ENCODE measurements at regions of chr17 and their contacts with region 1.

Region 1: DNA sequence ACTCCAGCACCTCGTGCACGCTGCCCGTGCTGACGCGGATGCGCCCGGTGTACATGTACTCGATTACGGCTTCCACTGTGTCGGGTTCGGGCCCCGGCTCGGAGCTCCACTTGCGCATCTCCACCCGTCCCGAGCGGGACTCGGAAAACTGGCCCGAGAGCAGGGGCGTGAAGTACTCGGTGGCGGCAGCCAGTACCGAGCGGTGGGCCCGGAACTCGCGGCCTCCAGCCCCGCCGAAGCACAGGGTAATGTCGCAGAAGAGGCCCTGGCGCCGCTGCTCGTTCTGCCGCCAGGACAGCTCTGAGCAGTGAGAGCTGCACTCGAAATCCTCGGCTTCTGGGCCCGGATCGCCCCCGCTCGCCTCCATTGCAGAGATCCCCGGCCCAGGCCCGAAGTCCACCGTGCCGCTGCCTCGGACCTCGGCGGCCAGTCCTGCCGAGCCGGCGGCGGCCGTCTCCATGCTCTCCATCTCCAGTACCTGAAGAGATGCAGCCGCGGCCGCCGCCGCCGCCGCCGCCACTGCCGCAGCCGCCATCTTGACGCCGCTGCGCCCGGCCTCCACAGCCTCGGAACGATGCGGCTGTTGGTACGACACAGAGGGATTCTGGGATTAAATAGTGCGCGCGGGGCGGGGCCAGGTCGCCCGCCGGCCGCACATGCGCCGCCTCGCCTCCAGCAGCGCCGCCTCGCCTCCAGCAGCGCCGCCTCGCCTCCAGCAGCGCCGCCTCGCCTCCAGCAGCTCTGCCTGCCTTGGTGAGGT is at the start of gene KLHL11:
- DNase-seq: peak; percentile 87
- H3K4me3 Mint-ChIP-seq: peak within 1 kb of the TSS; percentile 75
- H3K27ac Mint-ChIP-seq: peak within 1 kb of the TSS; percentile 81
- H3K4me1 Mint-ChIP-seq: peaks cover 46% of the 10 kb centered on the region
- H3K27me3 Mint-ChIP-seq: no peaks in the 10 kb centered on the region
- total RNA-seq, gene KLHL11: 44.3 and 46.0 TPM in 2 replicates

Region 2: GRCh38 chr17:41738077-41738735 is 126.8 kb before region 1 on chr17:
- intact Hi-C with region 1: loop called (anchors 10 kb)
- DNase-seq: peak; percentile 74
- H3K4me3 Mint-ChIP-seq: no peak overlapping the region
- H3K27ac Mint-ChIP-seq: no peak overlapping the region
- H3K4me1 Mint-ChIP-seq: peaks cover 6% of the 10 kb centered on the region
- H3K27me3 Mint-ChIP-seq: peaks cover 30% of the 10 kb centered on the region

Region 3: DNA sequence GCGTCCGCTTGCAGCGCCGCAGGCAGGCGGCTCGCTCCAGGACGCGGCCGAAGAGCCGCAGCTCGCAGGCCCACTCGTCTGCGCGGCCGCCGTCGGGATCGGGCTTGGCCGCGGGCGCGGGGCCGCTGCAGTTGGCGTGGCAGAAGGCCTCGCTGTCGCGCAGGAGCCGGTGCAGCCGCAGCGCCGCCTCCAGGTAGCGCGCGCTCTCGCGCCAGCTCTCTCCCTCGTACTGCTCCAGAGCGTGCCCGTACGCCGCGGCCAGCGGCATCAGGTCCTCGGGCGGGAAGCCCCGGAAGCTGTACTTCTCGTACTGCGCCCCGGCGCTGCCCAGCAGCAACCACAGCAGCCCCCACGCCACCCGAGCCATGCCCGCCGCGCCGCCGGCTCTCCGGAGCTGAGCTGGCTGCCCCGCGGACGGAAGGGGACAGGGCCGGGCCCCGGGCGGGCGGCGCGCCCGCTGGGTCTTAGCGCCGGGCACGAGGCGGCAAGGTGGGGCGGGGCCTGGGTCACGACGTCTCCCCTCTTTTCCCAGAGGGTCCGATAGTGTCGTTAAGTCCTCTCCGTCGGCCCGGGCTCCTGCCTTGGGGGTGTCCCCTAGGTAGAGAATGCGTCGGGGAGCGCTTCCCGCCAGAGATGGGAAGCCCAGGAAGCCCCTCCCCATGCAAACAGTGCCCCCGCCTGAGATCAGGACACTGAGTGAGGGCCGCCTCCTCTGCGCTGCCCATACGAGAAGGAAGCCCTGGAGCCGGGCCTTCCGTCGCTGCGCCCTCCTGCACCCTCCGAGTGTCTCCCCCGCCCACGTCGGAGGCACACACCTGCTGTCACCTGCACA is 53.3 kb before region 1 on chr17 and contains the start of gene P3H4:
- intact Hi-C with region 1: loop called (anchors 2 kb)
- DNase-seq: peak; percentile 73
- H3K4me3 Mint-ChIP-seq: peak within 1 kb of the TSS; percentile 86
- H3K27ac Mint-ChIP-seq: peak within 1 kb of the TSS; percentile 58
- H3K4me1 Mint-ChIP-seq: peaks cover 8% of the 10 kb centered on the region
- H3K27me3 Mint-ChIP-seq: peaks cover 14% of the 10 kb centered on the region
- total RNA-seq, gene P3H4: 7.8 and 8.6 TPM in 2 replicates

Region 4: GRCh38 chr17:41885733-41886132 is 20.7 kb after region 1 on chr17:
- intact Hi-C with region 1: no loop called
- DNase-seq: no peak
- H3K4me3 Mint-ChIP-seq: no peak overlapping the region
- H3K27ac Mint-ChIP-seq: no peak overlapping the region
- H3K4me1 Mint-ChIP-seq: peaks cover 3% of the 10 kb centered on the region
- H3K27me3 Mint-ChIP-seq: no peaks in the 10 kb centered on the region

Region 5: GRCh38 chr17:41907185-41907556 is 42.2 kb after region 1 on chr17:
- intact Hi-C with region 1: no loop called
- DNase-seq: no peak
- H3K4me3 Mint-ChIP-seq: no peak overlapping the region
- H3K27ac Mint-ChIP-seq: no peak overlapping the region
- H3K4me1 Mint-ChIP-seq: no peaks in the 10 kb centered on the region
- H3K27me3 Mint-ChIP-seq: no peaks in the 10 kb centered on the region

Region 6: GRCh38 chr17:41918314-41919164 is 53.5 kb after region 1 on chr17 and contains the start of gene ACLY:
- intact Hi-C with region 1: loop called (anchors 2 kb)
- DNase-seq: peak; percentile 98
- H3K4me3 Mint-ChIP-seq: peak within 1 kb of the TSS; percentile 95
- H3K27ac Mint-ChIP-seq: peak within 1 kb of the TSS; percentile 89
- H3K4me1 Mint-ChIP-seq: peaks cover 36% of the 10 kb centered on the region
- H3K27me3 Mint-ChIP-seq: no peaks in the 10 kb centered on the region
- total RNA-seq, gene ACLY: 223 and 232 TPM in 2 replicates

Region 7: GRCh38 chr17:41930009-41930832 is 65.2 kb after region 1 on chr17 and contains the start of gene ODAD4:
- intact Hi-C with region 1: loop called (anchors 5 kb)
- DNase-seq: peak; percentile 96
- H3K4me3 Mint-ChIP-seq: peak within 1 kb of the TSS; percentile 95
- H3K27ac Mint-ChIP-seq: peak within 1 kb of the TSS; percentile 95
- H3K4me1 Mint-ChIP-seq: peaks cover 42% of the 10 kb centered on the region
- H3K27me3 Mint-ChIP-seq: no peaks in the 10 kb centered on the region
- total RNA-seq, gene ODAD4: 0.50 and 0.85 TPM in 2 replicates

Region 8: DNA sequence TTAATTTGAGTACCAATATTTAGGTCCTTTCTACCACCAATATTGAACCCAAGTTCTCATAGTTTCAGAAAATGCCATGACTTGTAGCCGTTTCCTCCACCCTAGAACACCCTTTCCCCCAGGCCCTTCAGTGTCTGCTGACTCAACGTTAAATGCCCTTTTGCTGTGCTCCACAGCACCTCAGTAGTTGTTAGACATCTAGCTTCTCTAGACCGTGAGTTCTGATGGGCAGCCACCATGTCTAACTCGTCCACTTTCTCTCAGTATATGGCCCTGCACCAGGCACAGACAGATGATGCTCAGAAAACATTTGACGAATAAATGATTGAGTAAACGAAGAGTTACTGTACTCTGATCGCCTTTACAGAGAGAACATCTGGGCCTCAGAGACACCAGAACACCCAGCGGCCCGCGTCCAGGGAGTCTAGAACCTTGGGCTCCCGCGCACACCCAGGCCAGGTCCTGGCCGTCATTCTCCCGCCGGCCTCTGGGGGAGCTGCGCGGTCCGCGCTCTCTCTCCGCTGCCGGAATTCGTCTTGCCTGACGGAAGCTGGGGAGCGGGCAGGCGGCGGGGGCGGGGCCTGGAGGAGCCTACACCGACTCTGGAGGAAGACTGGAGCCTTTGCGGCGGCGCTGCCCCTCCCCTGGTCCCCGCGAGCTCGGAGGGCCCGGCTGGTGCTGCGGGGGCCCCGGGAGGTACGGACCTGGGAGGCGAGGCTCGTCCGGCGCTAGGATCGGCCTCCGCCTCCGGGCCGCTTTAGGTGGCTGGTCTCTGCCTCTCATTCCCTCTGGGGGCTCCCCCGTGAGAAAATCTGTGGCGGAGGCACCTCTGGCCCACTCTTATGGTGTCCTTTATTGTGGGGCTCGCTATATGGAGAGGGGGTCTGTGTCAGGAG is 154.7 kb after region 1 on chr17 and contains the start of gene NKIRAS2:
- intact Hi-C with region 1: loop called (anchors 10 kb)
- DNase-seq: peak; percentile 93
- H3K4me3 Mint-ChIP-seq: peak within 1 kb of the TSS; percentile 99
- H3K27ac Mint-ChIP-seq: peak within 1 kb of the TSS; percentile 79
- H3K4me1 Mint-ChIP-seq: peaks cover 42% of the 10 kb centered on the region
- H3K27me3 Mint-ChIP-seq: no peaks in the 10 kb centered on the region
- total RNA-seq, gene NKIRAS2: 25.8 and 28.2 TPM in 2 replicates

Region 9: GRCh38 chr17:42276359-42276608 is 411.3 kb after region 1 on chr17 and contains the start of gene STAT5B:
- intact Hi-C with region 1: loop called (anchors 5 kb)
- DNase-seq: peak; percentile 71
- H3K4me3 Mint-ChIP-seq: peak within 1 kb of the TSS; percentile 94
- H3K27ac Mint-ChIP-seq: peak within 1 kb of the TSS; percentile 93
- H3K4me1 Mint-ChIP-seq: peaks cover 39% of the 10 kb centered on the region
- H3K27me3 Mint-ChIP-seq: no peaks in the 10 kb centered on the region
- total RNA-seq, gene STAT5B: 162 and 164 TPM in 2 replicates